Activated naive CD4-positive, alpha-beta T cell treated with anti-CD3 and anti-CD28 coated beads, Interleukin-2, amount 10 ng/mL, durations not matched to agents 7 days and 5 days (primary cell): ENCODE measurements at regions of chr4 and their contacts with region 1.

Region 1: DNA sequence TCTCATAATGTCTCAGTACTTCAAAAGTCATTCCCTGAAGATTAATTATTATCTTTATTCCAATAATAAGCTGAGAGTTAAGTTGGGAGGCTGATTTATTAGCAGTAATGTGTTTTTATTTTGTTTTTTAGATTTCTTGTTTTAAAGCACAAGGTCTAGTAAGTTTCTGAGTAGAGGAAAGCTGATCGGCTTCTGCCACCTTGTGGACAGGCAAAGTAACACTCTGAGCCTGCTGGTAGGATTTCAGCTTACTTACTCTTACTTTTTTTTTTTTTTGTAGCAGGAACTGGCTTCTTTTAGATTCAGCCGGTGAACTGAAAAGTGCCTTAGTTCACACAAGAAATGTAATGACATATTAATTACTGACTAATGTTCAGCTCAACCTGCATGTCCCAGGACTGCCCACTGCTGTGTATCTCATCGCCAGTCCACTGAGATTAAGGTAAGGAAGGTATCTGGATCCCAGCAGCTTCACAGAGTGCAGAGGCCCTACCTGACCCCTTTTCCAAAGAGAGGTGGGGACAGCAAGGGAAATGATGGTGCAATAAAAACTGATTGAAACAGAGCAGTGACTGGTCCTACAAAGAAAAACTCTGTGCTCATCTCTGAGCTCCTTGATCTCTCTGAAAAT is 126.5 kb downstream of the ADGRA3 start:
- DNase-seq: peak; percentile 64
- H3K4me3 Mint-ChIP-seq: no peak overlapping the region
- H3K27ac Mint-ChIP-seq: no peak overlapping the region
- H3K4me1 Mint-ChIP-seq: no peaks in the 10 kb centered on the region
- H3K27me3 Mint-ChIP-seq: no peaks in the 10 kb centered on the region

Region 2: DNA sequence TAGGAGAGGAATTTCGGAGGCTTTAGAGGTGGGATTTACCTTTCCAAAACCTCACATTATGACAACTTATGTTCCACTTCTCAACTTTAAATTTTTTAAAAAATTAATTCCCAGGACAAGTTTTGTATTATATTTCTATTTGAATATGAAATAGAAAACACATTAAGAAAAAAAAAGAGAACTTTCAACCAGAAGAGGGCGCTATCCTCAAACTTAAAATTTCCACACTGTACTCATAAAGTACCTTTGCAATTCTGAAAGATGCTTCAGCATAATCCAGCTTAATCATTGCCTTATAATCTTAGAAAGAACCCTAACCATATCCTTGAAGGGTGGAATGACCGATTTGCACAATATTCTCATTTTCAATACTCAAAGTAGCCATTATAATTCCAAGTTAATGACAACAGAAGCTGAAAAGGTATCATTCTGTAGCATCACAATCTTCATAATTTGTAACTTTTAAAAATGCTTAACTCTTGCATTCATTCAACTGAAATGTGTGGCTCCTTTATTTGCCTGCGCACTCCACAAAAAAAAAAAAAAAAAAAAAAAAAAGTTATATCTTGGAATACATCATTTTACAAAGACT is 598.8 kb before region 1 on chr4:
- CTCF ChIA-PET with region 1: interaction called, 115 read pairs
- DNase-seq: no peak
- H3K4me3 Mint-ChIP-seq: no peak overlapping the region
- H3K27ac Mint-ChIP-seq: no peak overlapping the region
- H3K4me1 Mint-ChIP-seq: no peaks in the 10 kb centered on the region
- H3K27me3 Mint-ChIP-seq: no peaks in the 10 kb centered on the region

Region 3: GRCh38 chr4:22237155-22237751 is 152.1 kb before region 1 on chr4:
- CTCF ChIA-PET with region 1: interaction called, 20 read pairs
- DNase-seq: peak; percentile 73
- H3K4me3 Mint-ChIP-seq: peak overlapping the region; percentile 67
- H3K27ac Mint-ChIP-seq: peak overlapping the region; percentile 71
- H3K4me1 Mint-ChIP-seq: peaks cover 30% of the 10 kb centered on the region
- H3K27me3 Mint-ChIP-seq: no peaks in the 10 kb centered on the region

Region 4: GRCh38 chr4:22253431-22253830 is 135.9 kb before region 1 on chr4:
- CTCF ChIA-PET with region 1: no interaction called
- DNase-seq: no peak
- H3K4me3 Mint-ChIP-seq: no peak overlapping the region
- H3K27ac Mint-ChIP-seq: no peak overlapping the region
- H3K4me1 Mint-ChIP-seq: no peaks in the 10 kb centered on the region
- H3K27me3 Mint-ChIP-seq: no peaks in the 10 kb centered on the region